Panc1 (cell line): ENCODE measurements at regions of chr11 and their contacts with region 1.

Region 1: DNA sequence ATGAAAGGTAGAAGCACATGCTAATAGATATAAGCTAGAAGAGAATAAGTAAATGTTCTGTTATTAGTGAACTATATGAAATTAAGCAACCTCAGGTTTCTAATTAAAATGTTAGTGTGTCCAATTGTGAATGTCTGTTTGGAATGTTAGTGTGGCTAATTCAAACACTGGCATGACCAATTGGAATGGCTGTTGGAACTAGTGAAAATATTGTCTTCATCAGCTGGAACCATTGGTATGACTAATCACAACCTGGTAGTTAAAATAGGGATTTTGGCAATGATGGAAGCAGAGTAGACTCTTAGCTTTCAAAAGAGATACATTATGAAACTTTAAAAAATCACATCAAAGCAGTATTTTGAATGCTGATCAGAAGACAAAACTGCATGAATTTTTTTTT is 66.8 kb downstream of the CYB5R2 start:
- DNase-seq: no peak
- ATAC-seq: no peak
- H3K4me3 ChIP-seq: no peak overlapping the region
- H3K27ac ChIP-seq: no peak overlapping the region
- H3K4me1 ChIP-seq: no peaks in the 10 kb centered on the region
- H3K27me3 ChIP-seq: no peaks in the 10 kb centered on the region
- CTCF ChIP-seq: no peak

Region 2: DNA sequence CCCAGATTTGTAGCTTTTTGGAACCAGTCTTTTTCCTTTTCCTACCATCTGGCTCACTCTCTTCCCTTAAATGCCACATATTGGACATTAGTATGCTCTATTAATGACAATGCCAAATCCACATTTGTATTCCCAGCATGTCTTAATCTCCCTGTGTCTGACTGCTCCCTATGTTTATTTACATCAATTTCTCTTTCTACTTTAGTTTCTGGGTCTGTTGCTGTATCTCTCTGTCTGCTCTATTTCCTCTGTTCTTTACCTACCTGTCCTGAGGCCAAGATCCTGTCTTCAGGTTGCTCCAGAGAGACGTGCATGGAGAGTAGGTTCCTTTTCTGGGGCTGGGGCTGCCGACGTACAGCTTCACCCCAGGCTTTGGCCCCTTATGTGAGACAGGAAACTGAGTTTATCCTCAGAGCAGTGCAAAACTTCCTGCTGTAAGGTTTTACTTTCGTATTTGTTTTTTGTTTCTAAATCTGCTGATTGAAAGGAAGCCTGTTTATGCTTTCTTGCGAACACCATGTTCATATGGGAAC is 860.3 kb before region 1 on chr11:
- CTCF ChIA-PET with region 1: no interaction called
- POLR2A ChIA-PET with region 1: no interaction called
- in situ Hi-C with region 1: no loop called
- intact Hi-C with region 1: no loop called
- DNase-seq: no peak
- ATAC-seq: no peak
- H3K4me3 ChIP-seq: no peak overlapping the region
- H3K27ac ChIP-seq: no peak overlapping the region
- H3K4me1 ChIP-seq: no peaks in the 10 kb centered on the region
- H3K27me3 ChIP-seq: peaks cover 55% of the 10 kb centered on the region
- CTCF ChIP-seq: no peak

Region 3: GRCh38 chr11:7442588-7443215 is 163.8 kb before region 1 on chr11:
- CTCF ChIA-PET with region 1: no interaction called
- POLR2A ChIA-PET with region 1: no interaction called
- in situ Hi-C with region 1: no loop called
- intact Hi-C with region 1: no loop called
- DNase-seq: peak; percentile 56
- ATAC-seq: peak; percentile 92
- H3K4me3 ChIP-seq: no peak overlapping the region
- H3K27ac ChIP-seq: no peak overlapping the region
- H3K4me1 ChIP-seq: no peaks in the 10 kb centered on the region
- H3K27me3 ChIP-seq: peaks cover 2% of the 10 kb centered on the region; the same call in 1 of the 2 replicates
- CTCF ChIP-seq: peak; percentile 99

Region 4: GRCh38 chr11:7533199-7534041 is 73.1 kb before region 1 on chr11:
- CTCF ChIA-PET with region 1: interaction called, 11 read pairs
- POLR2A ChIA-PET with region 1: no interaction called
- in situ Hi-C with region 1: no loop called
- intact Hi-C with region 1: no loop called
- DNase-seq: no peak
- ATAC-seq: no peak
- H3K4me3 ChIP-seq: no peak overlapping the region
- H3K27ac ChIP-seq: no peak overlapping the region
- H3K4me1 ChIP-seq: no peaks in the 10 kb centered on the region
- H3K27me3 ChIP-seq: no peaks in the 10 kb centered on the region
- CTCF ChIP-seq: no peak